ENCODE measurements at regions of chr4 and their contacts with region 1.

Region 1: DNA sequence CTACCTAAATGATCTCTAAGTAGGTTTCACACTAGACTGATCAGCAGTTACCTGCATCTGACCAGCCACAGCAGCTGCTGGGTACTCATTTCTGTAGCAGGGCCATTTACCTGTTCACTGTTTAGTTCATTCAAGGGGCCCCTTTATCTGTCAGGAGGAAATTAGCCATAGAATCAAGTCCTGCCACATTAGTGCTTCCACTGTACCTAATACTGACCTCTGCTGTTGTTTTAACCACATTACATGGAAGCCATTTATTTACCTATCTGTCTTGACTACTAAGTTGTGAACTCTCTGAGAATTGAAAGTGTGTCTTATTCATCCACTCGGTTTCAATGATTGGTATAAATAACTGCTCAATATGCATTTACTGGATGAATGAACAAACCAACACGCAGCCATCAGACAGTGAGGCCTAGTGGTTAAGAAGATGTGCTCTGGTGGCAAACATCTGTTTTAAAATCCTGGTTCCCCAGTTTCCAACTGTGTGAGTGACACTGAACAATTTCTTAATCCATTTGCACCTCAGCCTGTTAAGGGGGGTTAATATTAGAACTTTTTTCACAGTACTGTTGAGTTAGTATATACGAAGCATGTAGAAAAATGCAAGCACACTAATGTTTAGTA is 30.0 kb upstream of the ANXA5 start:
- DNase-seq: peak; percentile 47 to 64 (median 52)
- ATAC-seq: peak; percentile 92
- H3K4me3 ChIP-seq: no peak overlapping the region
- H3K27ac ChIP-seq: no peak overlapping the region
- H3K4me1 ChIP-seq: no peaks in the 10 kb centered on the region
- H3K27me3 ChIP-seq: peaks cover 10 to 11% of the 10 kb centered on the region in 2 experiments; a peak in 3 of 5 replicates
- CTCF ChIP-seq: peak; percentile 58 to 80 (median 67)
- EP300 ChIP-seq: no peak
- POLR2A ChIP-seq: no peak
- RAD21 ChIP-seq: peak; percentile 78 to 86

Region 2: DNA sequence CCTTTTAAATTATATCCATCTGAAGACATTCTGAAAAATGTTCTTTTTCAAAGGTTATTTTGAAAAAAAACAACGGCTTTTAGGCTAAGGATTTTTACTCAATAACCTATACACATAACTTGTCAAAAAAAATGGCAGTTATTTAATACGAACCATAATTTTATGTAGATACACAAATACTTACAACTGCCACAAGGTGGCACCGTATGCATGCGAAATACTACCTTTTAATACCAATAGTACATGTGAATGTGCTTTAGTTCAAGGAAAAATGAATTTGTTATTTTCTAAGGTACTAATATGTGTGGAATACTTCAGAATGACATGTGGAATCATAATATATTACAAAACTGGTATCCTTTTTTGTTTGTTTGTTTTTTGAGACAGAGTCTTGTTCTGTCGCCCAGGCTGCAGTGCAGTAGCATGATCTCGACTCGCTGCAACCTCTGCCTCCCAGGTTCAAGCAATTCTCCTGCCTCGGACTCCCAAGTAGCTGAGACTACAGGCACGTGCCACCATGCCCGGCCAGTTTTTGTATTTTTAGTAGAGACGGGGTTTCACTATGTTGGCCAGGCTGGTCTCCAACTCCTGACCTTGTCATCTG is 1655.5 kb before region 1 on chr4:
- CTCF ChIA-PET with region 1: interaction called, 3 read pairs
- POLR2A ChIA-PET with region 1: no interaction called
- in situ Hi-C with region 1: no loop called
- intact Hi-C with region 1: loop called (anchors 5 kb)
- DNase-seq: peak; percentile 19 to 79 (median 30)
- ATAC-seq: no peak
- H3K4me3 ChIP-seq: no peak overlapping the region
- H3K27ac ChIP-seq: no peak overlapping the region
- H3K4me1 ChIP-seq: peaks cover 3 to 13% of the 10 kb centered on the region in 2 experiments; a peak in 3 of 5 replicates
- H3K27me3 ChIP-seq: no peaks in the 10 kb centered on the region
- CTCF ChIP-seq: peak; percentile 28 to 69 (median 41); a peak in 4 of 6 replicates
- EP300 ChIP-seq: no peak
- POLR2A ChIP-seq: no peak
- RAD21 ChIP-seq: peak; percentile 63 to 64

Region 3: GRCh38 chr4:121462660-121463261 is 264.0 kb before region 1 on chr4:
- CTCF ChIA-PET with region 1: no interaction called
- POLR2A ChIA-PET with region 1: no interaction called
- in situ Hi-C with region 1: no loop called
- intact Hi-C with region 1: loop called (anchors 5 kb)
- DNase-seq: peak; percentile 14 to 54 (median 17)
- ATAC-seq: peak; percentile 82
- H3K4me3 ChIP-seq: no peak overlapping the region
- H3K27ac ChIP-seq: no peak overlapping the region
- H3K4me1 ChIP-seq: no peaks in the 10 kb centered on the region
- H3K27me3 ChIP-seq: no peaks in the 10 kb centered on the region
- CTCF ChIP-seq: peak; percentile 39 to 59 (median 56); a peak in 5 of 6 replicates
- EP300 ChIP-seq: no peak
- POLR2A ChIP-seq: no peak
- RAD21 ChIP-seq: peak in 1 of 2 experiments; percentile 43; a peak in 3 of 4 replicates

Region 4: GRCh38 chr4:121696581-121697461 is 29.9 kb before region 1 on chr4 and contains the start of gene ANXA5:
- CTCF ChIA-PET with region 1: interaction called, 6 read pairs
- POLR2A ChIA-PET with region 1: interaction called, 4 read pairs
- in situ Hi-C with region 1: no loop called
- intact Hi-C with region 1: loop called (anchors 1 kb)
- DNase-seq: peak; percentile 91 to 94 (median 91)
- ATAC-seq: peak; percentile 98
- H3K4me3 ChIP-seq: peak within 1 kb of the TSS; percentile 87
- H3K27ac ChIP-seq: peak within 1 kb of the TSS; percentile 78
- H3K4me1 ChIP-seq: peaks cover 2 to 20% of the 10 kb centered on the region in 2 experiments; a peak in 4 of 5 replicates
- H3K27me3 ChIP-seq: peaks cover 0 to 7% of the 10 kb centered on the region in 2 experiments; a peak in 2 of 5 replicates
- CTCF ChIP-seq: peak; percentile 57 to 76 (median 70)
- EP300 ChIP-seq: no peak; the same call in 1 of the 2 replicates
- POLR2A ChIP-seq: peak; percentile 85
- RAD21 ChIP-seq: peak; percentile 74 to 91
- polyA plus RNA-seq, gene ANXA5: 85.9 to 131 TPM